ENCODE measurements at regions of chr9 and their contacts with region 1.

Region 1: DNA sequence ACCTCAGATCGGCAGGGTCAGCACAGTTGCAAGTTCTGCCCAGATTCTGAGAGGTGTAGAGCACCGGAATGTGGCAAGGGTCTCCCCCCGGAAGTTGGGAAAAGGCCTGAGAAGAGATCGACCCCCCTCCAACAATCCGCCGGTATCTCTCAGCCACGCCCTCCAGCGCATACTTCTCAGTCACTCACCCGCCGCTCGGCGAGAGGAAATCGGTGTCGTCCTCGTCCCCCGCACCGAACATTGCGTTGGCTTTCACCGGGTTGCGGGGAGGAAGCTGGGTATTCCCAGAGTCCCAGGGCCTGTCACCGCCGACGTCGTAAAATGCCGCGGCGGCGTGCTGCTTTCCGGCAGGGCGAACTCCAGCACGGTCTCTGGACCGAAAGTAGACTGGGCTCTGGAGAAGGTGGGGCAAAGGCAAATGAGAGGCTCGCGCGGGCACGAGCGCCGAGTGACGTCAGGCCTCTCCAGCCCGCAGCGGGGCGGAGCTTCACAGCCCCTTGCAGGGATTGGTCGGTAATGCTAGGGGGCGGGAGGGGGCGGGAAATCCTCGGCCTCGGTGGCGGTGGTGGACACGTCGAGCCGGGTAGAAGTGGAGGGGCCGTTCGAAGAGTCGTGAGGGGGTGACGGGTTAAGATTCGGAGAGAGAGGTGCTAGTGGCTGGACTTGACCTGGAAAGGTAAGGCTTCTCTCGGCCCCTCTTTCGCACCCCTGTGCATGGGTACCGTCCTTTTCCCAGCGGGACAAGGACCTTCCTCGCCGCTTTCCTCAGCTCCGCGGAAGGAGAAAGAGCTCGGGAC is at the starts of genes FKBP15 and SLC31A1:
- DNase-seq: peak; percentile 98 to 100 (median 99)

Region 2: DNA sequence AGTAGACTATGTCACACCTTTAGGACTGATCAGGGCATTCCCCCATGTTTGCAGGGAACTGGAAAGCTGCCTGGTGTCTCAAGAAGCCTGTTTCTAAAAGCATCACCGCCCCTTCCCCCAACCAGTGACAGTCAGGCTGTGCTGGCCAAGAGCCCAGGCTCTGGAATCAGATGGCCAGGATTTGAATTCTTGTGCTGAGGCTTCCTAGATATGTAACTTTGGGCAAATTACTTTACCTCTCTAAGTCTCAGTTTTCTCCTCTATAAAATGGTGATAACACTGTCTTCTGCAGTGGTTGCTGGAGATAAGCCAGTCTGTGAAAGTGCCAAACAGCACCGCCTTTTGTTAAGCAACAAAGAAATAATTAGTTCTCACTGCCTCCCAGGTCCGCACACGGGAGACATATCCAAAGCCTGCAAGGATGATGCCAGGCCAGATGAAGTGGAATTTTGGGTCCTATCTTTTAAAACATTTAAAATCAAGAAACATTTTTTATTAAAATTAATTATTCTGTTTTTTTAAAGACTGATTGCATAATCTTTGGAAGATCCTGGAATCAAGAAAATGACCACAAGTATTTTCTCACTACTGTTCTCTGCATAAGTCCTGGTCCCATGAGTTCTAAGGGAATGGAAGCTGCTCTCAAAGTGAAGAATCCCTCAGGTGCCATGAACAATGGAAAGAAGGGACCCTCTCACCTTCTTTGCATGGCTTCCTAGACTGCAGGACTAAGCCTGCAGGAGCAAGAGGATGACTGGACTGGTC is 56.5 kb before region 1 on chr9:
- intact Hi-C with region 1: loop called (anchors 5 kb)
- DNase-seq: peak; percentile 53 to 93 (median 70)

Measured in posterior cingulate gyrus (tissue), 11 donors.